MCF 10A (cell line): ENCODE measurements at regions of chr10 and their contacts with region 1.

Region 1: DNA sequence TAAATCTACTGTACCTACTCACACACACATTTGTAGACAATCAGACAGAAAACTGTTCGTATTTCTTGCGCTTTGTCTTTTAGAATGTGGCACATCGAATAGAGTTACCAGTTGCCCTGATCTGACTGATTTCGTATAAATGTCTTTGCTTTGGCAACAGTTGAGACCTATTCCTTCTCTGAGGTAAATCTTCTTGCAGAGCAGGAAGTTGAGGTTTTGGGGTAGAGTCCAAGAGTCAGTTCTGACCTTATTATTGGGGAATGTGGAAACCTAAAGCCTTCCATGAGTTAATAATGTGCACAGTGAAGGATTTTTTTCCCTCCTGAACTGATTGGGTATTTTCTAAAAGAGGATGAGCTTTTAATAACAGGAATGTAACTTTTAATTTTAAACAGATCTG is 135.3 kb downstream of the KIAA1217 start:
- DNase-seq: peak; percentile 91
- H3K4me3 Mint-ChIP-seq: peak overlapping the region; percentile 52
- H3K27ac Mint-ChIP-seq: peak overlapping the region; percentile 90
- H3K4me1 Mint-ChIP-seq: peaks cover 45% of the 10 kb centered on the region
- H3K27me3 Mint-ChIP-seq: no peaks in the 10 kb centered on the region
- CTCF ChIP-seq: no peak

Region 2: DNA sequence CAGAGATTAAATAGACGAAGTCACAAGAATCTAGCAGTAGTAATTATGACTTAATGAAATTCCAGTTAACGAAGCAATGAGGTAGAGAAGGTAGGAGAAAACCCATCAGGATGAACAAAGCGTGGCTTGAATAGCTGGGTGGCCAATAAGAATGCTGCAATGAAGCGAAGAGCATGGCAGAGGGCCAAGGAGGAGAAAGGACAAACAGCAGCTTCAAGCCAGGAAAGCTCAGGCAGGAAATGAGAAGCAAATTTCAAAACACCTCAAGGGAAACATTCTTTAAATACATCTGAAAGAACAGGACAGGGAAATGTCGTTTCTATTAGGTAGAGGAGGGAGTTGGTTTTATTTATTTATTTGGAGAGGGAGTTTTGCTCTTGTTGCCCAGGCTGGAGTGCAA is 12.8 kb before region 1 on chr10:
- CTCF ChIA-PET with region 1: interaction called, 5 read pairs
- POLR2A ChIA-PET with region 1: interaction called, 32 read pairs
- intact Hi-C with region 1: no loop called
- DNase-seq: peak; percentile 93
- H3K4me3 Mint-ChIP-seq: peak overlapping the region; percentile 22
- H3K27ac Mint-ChIP-seq: peak overlapping the region; percentile 77
- H3K4me1 Mint-ChIP-seq: peaks cover 29% of the 10 kb centered on the region
- H3K27me3 Mint-ChIP-seq: no peaks in the 10 kb centered on the region
- CTCF ChIP-seq: no peak

Region 3: GRCh38 chr10:24744946-24745345 is 400.7 kb after region 1 on chr10:
- CTCF ChIA-PET with region 1: no interaction called
- POLR2A ChIA-PET with region 1: no interaction called
- intact Hi-C with region 1: no loop called
- DNase-seq: no peak
- H3K4me3 Mint-ChIP-seq: no peak overlapping the region
- H3K27ac Mint-ChIP-seq: no peak overlapping the region
- H3K4me1 Mint-ChIP-seq: no peaks in the 10 kb centered on the region
- H3K27me3 Mint-ChIP-seq: no peaks in the 10 kb centered on the region
- CTCF ChIP-seq: no peak